PC-9 (cell line): ENCODE measurements at regions of chr16 and their contacts with region 1.

Region 1: GRCh38 chr16:19086322-19087199 is 19.1 kb downstream of the COQ7 start:
- DNase-seq: peak; percentile 91 to 94
- H3K4me3 ChIP-seq: peak overlapping the region; percentile 60
- H3K27ac ChIP-seq: peak overlapping the region; percentile 51
- H3K4me1 ChIP-seq: peaks cover 20% of the 10 kb centered on the region
- H3K27me3 ChIP-seq: no peaks in the 10 kb centered on the region
- CTCF ChIP-seq: peak; percentile 96

Region 2: GRCh38 chr16:19105891-19106624 is 19.5 kb after region 1 on chr16:
- CTCF ChIA-PET with region 1: interaction called, 5 read pairs
- POLR2A ChIA-PET with region 1: interaction called, 11 read pairs
- intact Hi-C with region 1: no loop called
- DNase-seq: no peak
- H3K4me3 ChIP-seq: no peak overlapping the region
- H3K27ac ChIP-seq: peak overlapping the region; percentile 95
- H3K4me1 ChIP-seq: peaks cover 37% of the 10 kb centered on the region
- H3K27me3 ChIP-seq: no peaks in the 10 kb centered on the region
- CTCF ChIP-seq: no peak

Region 3: DNA sequence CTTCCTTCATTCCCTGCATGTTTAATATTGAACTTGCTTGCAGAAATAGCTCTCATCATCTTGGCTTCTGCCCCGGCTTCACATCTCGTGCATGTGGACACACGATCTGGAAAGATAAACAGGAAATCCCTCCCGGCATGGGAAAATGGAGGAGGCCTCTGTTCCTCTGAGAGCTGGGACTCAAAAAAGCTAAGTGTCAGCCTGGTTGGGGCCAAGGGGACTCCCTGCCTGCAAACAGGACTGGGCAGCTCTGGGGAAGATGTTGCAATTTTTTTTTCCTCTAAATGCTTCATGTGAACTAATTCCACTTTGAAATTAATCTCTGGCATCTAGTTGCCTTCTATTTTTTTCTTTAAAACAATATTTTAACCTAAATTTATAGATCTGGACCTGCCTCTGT is 52.0 kb after region 1 on chr16:
- CTCF ChIA-PET with region 1: interaction called, 5 read pairs
- POLR2A ChIA-PET with region 1: interaction called, 8 read pairs
- intact Hi-C with region 1: loop called (anchors 1 kb)
- DNase-seq: peak; percentile 82 to 84
- H3K4me3 ChIP-seq: no peak overlapping the region
- H3K27ac ChIP-seq: peak overlapping the region; percentile 92; the same call in 1 of the 2 replicates
- H3K4me1 ChIP-seq: peaks cover 59% of the 10 kb centered on the region
- H3K27me3 ChIP-seq: no peaks in the 10 kb centered on the region
- CTCF ChIP-seq: no peak

Region 4: DNA sequence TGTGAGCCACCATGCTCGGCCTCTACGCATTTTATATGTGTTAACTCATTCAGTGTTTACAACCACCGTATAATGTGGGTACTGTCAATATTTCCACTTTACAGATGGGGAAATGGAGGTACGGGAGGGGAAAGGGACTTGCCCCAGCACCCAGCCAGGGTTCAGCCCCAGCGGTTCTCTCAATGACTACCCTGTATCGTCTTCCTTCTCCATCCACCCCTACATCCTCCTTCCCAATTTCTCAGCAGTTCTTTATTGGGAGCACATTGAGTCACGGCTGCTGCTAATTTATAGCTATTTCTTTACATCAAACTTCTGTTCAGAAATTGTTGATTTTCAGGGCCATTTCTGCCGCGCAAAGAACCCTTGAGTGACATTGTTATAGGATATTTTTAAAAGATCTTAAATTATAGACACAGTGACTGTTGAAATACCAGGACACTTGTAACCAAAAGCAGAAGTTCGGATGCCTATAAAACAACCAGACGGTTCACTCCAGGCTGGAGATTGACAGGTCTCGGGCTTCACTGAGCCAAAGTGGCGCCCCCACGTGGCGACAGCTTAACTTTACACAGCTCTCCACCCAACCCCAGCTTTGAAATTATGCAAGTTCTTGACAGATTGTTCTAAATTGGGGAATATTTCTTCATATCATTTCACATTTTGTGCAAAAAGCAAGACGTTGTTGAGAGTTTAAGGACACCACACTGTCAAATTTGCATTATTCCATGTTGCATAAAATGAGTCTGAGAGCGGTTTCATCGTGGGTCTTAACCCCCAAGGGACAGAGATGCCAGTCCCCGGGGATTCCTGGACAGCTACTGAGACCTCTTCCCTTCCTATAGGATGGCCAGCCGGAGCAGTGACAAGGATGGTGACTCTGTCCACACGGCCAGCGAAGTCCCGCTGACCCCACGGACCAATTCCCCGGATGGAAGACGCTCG is 93.3 kb after region 1 on chr16:
- CTCF ChIA-PET with region 1: interaction called, 5 read pairs
- POLR2A ChIA-PET with region 1: no interaction called
- intact Hi-C with region 1: loop called (anchors 1 kb)
- DNase-seq: peak; percentile 56 to 63
- H3K4me3 ChIP-seq: no peak overlapping the region
- H3K27ac ChIP-seq: no peak overlapping the region
- H3K4me1 ChIP-seq: peaks cover 31% of the 10 kb centered on the region
- H3K27me3 ChIP-seq: no peaks in the 10 kb centered on the region
- CTCF ChIP-seq: peak; percentile 90

Region 5: DNA sequence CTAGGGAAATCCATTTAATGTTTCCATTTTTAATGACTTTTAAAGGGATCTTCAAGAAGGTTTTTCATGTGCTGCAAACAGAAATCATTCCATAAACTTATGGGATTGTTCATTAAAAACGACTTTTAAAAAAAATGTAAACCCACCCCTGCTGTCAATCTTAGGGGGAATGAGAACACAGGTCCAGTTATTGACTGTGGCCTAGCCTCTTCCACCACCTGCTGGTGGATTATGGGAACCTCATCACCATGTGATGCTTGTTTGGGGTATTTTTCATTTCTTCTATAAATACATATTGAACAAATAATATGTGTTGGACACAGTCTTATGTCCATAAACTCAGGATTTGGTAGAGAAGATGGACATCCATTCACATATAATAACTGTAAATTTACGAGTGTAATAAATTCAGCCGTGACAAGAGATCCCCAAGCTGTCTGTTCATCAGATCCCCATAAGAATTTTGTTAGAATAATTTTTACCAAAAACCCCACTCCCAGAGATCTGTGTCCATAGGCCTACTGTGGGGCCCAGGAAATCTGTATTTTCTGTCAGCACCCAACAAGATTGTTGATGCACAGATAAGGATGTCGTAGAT is 289.1 kb after region 1 on chr16:
- CTCF ChIA-PET with region 1: interaction called, 7 read pairs
- POLR2A ChIA-PET with region 1: interaction called, 22 read pairs
- intact Hi-C with region 1: loop called (anchors 1 kb)
- DNase-seq: peak; percentile 55 to 62
- H3K4me3 ChIP-seq: no peak overlapping the region
- H3K27ac ChIP-seq: 0 out of 2 replicates have a peak overlapping the region, but pooled peaks have one; percentile 2
- H3K4me1 ChIP-seq: no peaks in the 10 kb centered on the region; the same call in 1 of the 2 replicates
- H3K27me3 ChIP-seq: no peaks in the 10 kb centered on the region
- CTCF ChIP-seq: peak; percentile 95

Region 6: GRCh38 chr16:19521471-19522396 is 435.2 kb after region 1 on chr16 and contains the start of gene GDE1:
- CTCF ChIA-PET with region 1: interaction called, 5 read pairs
- POLR2A ChIA-PET with region 1: no interaction called
- intact Hi-C with region 1: loop called (anchors 5 kb)
- DNase-seq: peak; percentile 75 to 96
- H3K4me3 ChIP-seq: peak within 1 kb of the TSS; percentile 74
- H3K27ac ChIP-seq: peak within 1 kb of the TSS; percentile 76
- H3K4me1 ChIP-seq: peaks cover 68% of the 10 kb centered on the region
- H3K27me3 ChIP-seq: no peaks in the 10 kb centered on the region
- CTCF ChIP-seq: peak; percentile 46; the same call in 1 of the 2 replicates
- total RNA-seq, gene GDE1: 131 and 154 TPM in 2 replicates